ENCODE measurements at regions of chr5 and their contacts with region 1.

Region 1: DNA sequence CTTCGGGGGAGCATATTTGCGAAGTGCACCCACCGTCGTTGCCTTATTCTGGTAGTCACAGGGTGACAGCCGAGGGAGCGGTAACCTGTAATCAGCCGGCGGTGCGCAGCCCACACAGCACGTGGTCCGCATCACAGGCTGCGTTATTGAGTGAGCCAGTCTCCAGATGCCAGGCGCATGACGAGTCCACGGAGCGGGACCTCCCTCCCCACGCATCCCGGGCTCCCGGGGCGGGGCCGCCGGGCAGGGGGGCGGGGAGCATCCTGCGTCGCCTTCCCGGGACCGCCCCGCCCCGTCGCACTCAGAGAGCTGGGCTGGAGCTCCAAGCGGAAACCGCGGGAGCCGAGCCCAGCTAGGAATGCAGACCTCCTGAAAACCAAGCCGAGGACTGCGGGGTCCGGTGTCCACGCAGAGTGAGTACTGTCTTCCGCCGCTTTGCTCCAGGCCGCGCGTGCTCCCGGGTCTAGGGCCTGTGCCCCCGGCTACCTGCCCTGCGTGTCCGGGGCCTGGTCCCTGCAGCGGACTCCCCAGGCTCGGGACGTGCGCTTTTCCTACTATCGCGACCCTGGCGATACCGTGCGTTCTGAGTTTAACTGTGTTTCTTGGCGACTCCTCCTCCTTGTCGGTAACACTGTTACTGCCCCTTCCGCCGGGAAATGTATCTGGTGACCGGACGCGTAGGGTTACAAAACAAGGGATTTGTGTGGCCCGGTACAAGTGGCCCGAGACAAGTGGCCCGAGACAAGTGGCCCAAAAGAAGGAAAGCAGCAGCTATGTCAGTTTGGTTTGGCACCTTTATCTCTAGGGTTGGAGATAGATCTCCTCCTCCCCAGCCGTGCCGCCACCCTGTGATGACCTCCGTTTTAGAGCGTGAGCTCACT is 40.6 kb downstream of the CAST start:
- DNase-seq: peak; percentile 61
- H3K4me3 Mint-ChIP-seq: peak overlapping the region; percentile 88
- H3K27ac Mint-ChIP-seq: peak overlapping the region; percentile 83
- H3K4me1 Mint-ChIP-seq: peaks cover 35% of the 10 kb centered on the region
- H3K27me3 Mint-ChIP-seq: no peaks in the 10 kb centered on the region

Region 2: DNA sequence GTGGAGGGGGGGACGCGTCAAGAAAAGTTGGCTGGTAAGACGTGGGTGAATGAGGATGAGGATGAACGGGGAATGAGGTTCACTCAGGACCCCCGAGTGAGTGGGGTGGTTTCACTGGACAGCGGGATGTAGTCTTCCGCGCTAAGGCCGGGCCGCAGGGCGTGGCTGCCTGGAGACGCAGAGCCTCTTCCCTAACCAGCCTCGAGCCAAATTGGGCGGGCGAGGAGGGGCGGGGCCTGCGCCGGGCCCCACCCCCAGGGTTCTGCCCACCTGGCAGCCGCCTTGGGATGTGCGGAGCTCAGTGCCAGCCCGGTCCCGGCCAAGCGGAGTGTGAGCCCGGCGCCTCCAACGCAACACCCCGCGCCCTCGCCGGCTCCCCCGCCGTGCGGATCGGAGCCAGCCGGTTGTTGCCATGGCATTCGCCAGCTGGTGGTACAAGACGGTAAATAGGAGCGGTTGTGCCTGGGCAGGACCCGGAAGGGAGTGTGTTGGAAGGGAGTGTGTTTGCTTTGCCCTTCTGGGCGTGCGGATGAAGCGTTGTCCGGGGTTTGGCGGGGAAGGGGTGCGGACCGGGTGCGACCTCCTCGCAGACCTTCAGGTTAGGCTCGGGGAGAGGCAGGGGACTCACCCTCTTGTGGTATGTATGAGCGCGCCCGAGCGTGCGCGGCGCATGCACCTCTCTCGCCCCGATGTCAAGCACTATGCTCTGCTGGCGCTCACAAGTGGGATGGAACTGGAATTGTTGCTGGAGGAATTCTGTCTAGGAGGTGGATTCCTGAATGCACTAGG is 39.8 kb before region 1 on chr5:
- intact Hi-C with region 1: loop called (anchors 1 kb)
- DNase-seq: peak; percentile 82
- H3K4me3 Mint-ChIP-seq: peak overlapping the region; percentile 90
- H3K27ac Mint-ChIP-seq: peak overlapping the region; percentile 96
- H3K4me1 Mint-ChIP-seq: peaks cover 55% of the 10 kb centered on the region
- H3K27me3 Mint-ChIP-seq: peaks cover 26% of the 10 kb centered on the region

Region 3: DNA sequence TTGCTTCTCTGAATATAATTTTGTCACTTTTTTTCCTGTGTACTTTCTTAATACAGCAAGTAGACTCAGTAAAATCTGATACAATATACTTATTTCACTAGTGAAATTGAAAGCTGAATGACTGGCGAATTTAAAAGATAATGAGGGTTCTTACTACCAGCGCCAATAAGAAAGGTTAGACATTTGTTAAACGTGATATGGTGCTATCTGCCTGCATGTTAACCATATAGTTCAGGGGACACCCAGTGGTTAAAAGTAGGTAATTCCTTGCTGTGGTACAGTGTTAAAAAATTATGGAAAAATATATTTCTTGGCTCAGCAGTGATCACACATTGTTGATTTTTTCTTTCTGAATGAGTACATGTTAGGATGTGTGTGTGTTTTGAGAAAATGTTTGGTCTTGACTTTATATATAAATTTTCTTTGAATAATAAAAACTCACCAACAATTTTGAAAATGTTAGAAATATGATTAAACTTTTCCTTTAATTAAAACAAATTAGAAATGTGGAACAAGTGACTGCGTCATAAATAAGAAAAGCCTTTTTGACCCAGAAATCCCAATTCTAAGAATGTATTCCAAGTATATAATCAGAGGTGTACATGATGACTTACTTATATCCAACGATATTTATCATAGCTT is 14.8 kb before region 1 on chr5:
- intact Hi-C with region 1: loop called (anchors 2 kb)
- DNase-seq: no peak
- H3K4me3 Mint-ChIP-seq: no peak overlapping the region
- H3K27ac Mint-ChIP-seq: no peak overlapping the region
- H3K4me1 Mint-ChIP-seq: peaks cover 5% of the 10 kb centered on the region
- H3K27me3 Mint-ChIP-seq: no peaks in the 10 kb centered on the region

Region 4: DNA sequence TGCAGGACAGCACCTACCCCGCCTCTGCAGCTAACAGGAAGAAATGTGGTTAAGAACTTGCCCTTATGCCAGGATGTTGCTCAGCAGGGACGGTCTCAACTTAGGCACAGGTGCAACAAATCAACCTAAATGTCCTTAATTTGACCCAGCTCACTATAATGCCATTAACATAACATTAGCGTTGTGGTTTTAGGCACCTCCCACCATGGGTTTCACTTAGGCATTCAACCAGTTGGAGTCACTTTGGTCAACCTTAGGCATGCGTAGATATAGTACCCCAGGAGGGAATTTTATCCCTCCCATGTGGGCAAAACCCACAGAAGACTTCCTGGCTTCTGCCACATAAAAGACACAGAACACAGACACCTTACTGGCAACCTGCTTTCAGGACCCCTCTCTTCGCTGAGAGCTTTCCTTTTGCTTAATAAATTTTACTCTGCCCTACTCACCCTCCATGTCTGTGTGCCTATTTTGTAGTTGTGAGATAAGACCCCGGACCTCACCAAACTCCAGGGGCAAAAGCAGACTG is 113.7 kb after region 1 on chr5:
- intact Hi-C with region 1: no loop called
- DNase-seq: peak; percentile 44
- H3K4me3 Mint-ChIP-seq: peak overlapping the region; percentile 77
- H3K27ac Mint-ChIP-seq: peak overlapping the region; percentile 91
- H3K4me1 Mint-ChIP-seq: peaks cover 55% of the 10 kb centered on the region
- H3K27me3 Mint-ChIP-seq: no peaks in the 10 kb centered on the region

Measured in activated T-helper 2 cell treated with anti-CD3 and anti-CD28 coated beads, Interferon-gamma antibody, Interleukin-2, Interleukin-4, amounts not matched to agents 10 μg/mL and 5 μg/mL and 100 μg/mL, durations not matched to agents 14 hours and 24 hours and 36 hours (primary cell).